Lower leg skin (tissue), 4 donors: ENCODE measurements at regions of chr1 and their contacts with region 1.

Region 1: DNA sequence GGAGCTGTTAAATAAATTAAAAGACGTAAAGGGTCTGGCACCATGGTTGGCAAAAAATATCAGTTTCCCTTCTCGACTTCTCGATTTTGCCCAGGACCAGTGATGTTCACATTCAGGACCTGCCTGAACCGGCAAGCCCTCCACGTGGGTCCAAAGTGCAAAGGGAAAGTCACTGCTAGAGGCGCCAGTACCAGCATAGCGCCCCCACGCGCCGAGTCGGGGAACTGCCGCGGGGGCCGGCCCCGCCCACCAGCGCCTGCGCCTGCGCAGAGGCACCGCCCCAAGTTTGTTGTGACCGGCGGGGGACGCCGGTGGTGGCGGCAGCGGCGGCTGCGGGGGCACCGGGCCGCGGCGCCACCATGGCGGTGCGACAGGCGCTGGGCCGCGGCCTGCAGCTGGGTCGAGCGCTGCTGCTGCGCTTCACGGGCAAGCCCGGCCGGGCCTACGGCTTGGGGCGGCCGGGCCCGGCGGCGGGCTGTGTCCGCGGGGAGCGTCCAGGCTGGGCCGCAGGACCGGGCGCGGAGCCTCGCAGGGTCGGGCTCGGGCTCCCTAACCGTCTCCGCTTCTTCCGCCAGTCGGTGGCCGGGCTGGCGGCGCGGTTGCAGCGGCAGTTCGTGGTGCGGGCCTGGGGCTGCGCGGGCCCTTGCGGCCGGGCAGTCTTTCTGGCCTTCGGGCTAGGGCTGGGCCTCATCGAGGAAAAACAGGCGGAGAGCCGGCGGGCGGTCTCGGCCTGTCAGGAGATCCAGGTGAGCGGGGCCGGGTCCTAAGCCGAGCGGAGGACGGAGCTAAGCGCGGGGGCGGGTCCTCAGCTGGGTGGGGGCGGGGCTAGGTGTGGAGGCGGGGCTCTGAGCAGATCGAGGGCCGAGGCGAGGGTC is at the start of gene PINK1:
- DNase-seq: peak; percentile 76 to 96
- H3K4me3 ChIP-seq: peak within 1 kb of the TSS; percentile 99
- CTCF ChIP-seq: peak in 2 of 3 donors; percentile 93 to 98
- POLR2A ChIP-seq: peak in 1 of 2 donors; percentile 68
- total RNA-seq, gene PINK1: 149 to 173 (median 161) TPM

Region 2: GRCh38 chr1:20485527-20486456 is 147.6 kb before region 1 on chr1 and contains the start of gene CAMK2N1:
- intact Hi-C with region 1: no loop called
- DNase-seq: peak in 1 of 2 donors; percentile 93
- H3K4me3 ChIP-seq: peak within 1 kb of the TSS; percentile 44
- CTCF ChIP-seq: no peak
- POLR2A ChIP-seq: no peak
- total RNA-seq, gene CAMK2N1: 3.8 to 13.3 (median 8.4) TPM

Region 3: DNA sequence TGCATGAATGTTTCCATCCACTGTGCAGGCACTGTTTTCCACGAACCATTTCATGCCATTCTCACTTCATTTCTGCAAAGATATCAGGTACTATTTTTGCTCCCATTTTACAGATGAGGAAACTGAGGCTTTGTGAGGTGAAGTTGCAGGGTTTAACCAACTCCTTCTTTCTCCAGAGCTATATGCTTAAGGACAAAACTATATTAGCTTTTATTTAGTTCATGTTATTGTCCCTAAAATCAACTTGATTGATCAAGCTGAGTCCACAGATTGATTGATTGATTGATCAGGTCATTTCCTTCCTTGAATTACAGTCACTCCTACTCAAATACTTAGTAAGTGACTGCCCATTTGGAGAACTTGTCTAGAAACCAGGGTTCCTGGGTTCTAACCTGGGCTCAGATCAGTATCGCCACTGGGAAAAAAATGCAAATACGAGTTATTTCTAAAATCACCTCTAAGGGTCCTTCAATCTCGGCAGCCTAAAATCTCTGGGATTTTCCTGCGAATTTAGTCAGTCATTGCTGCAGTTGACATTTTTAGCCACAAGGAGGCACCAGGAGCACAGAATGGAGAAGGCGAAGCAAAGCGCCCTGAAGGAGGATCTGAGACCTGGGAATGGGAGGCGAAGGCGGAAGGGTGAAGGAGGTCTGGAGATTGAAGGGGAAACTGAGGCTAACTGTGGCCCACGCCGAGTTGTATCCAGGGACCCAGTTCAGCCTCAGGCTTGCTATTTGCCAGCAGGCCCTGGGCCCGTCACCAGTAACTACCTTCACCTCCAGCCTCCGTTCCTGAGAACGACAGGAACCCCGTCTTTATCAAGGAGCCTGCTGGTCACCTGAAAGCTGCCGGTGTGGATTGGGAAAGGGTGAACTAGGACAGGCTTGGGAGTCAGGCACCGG is 111.2 kb before region 1 on chr1:
- intact Hi-C with region 1: loop called (anchors 5 kb)
- DNase-seq: peak; percentile 80 to 93
- H3K4me3 ChIP-seq: no peak overlapping the region
- CTCF ChIP-seq: peak in 2 of 3 donors; percentile 26 to 71
- POLR2A ChIP-seq: no peak